CD8-positive, alpha-beta memory T cell (primary cell): ENCODE measurements at regions of chr15 and their contacts with region 1.

Region 1: DNA sequence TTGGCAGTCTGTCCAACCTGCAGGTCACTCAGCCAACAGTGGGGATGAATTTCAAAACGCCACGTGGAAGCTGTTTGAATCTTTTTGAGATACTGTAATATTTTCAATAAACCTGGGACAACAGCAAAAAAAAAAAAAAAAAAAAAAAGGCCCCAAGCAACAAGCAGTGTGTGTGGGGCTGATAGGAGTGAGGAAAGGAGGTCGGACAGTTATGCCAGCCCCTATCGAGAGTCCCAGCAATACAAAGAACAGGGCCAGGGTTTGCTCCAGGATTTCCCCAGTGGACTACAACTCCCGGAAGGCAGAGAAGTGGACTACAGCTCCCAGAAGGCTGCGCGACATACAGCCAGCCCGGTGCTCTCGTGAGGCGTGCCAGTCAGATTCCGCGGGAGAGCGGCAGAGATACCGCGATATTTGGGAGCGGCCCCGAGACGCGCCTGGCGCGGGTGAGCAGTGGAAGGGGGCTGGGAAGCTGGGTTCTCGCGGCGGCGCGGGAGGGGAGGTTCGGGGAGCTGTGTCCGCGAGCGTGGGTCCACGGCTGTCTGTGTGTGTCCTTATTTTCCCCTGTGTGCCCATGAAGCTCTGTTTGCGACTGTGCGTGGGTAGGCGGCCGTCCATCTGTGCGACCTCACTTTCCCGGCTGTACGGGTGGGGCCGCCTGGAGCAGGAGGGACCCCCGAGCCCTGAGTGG is at the start of gene PPCDC:
- DNase-seq: peak; percentile 86 to 96 (median 91)
- H3K4me3 ChIP-seq: peak within 1 kb of the TSS; percentile 84
- H3K4me3 Mint-ChIP-seq: peak within 1 kb of the TSS; percentile 91 to 97 (median 94)
- H3K27ac ChIP-seq: peak within 1 kb of the TSS; percentile 82
- H3K27ac Mint-ChIP-seq: peak within 1 kb of the TSS; percentile 74 to 97 (median 90)
- H3K4me1 ChIP-seq: peaks cover 12% of the 10 kb centered on the region
- H3K4me1 Mint-ChIP-seq: peaks cover 17 to 23% (median 23%) of the 10 kb centered on the region in 3 donors
- H3K27me3 ChIP-seq: no peaks in the 10 kb centered on the region
- H3K27me3 Mint-ChIP-seq: peaks cover 0 to 1% of the 10 kb centered on the region in 2 donors
- total RNA-seq, gene PPCDC: 35.5 to 39.2 TPM

Region 2: DNA sequence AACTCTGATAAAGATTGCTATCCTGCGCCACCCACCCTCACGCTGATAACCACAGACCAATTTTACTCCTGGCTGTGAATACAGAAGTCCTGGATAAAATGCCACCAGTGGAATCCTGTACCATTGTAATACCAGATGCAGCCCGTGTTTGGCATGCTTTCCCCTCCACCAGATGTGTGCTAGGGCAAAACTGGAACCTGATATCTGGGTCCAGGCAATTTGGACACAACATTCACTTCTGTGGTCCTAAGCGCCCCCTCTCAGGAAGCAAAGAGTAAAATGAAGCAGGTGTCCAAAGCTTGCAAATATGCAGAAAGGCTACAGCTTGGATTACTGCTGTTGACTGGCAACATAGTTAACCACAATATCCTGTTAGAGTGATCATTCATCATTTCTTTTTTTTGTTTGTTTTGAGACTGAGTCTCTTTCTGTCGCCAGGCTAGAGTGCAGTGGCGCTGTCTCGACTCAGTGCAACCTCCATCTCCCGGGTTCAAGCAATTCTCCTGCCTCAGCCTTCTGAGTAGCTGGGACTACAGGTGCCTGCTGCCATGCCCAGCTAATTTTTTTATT is 1064.2 kb before region 1 on chr15:
- CTCF ChIA-PET with region 1: no interaction called
- POLR2A ChIA-PET with region 1: interaction called, 10 read pairs
- DNase-seq: peak in 2 of 5 donors; percentile 38 to 68
- H3K4me3 ChIP-seq: no peak overlapping the region
- H3K4me3 Mint-ChIP-seq: peak overlapping the region; percentile 25 to 86 (median 59)
- H3K27ac ChIP-seq: no peak overlapping the region
- H3K27ac Mint-ChIP-seq: peak overlapping the region; percentile 37 to 89 (median 54)
- H3K4me1 ChIP-seq: peaks cover 22% of the 10 kb centered on the region
- H3K4me1 Mint-ChIP-seq: peaks cover 20 to 30% (median 25%) of the 10 kb centered on the region in 3 donors
- H3K27me3 ChIP-seq: no peaks in the 10 kb centered on the region
- H3K27me3 Mint-ChIP-seq: no peaks in the 10 kb centered on the region

Region 3: GRCh38 chr15:74873756-74874424 is 149.4 kb before region 1 on chr15:
- CTCF ChIA-PET with region 1: no interaction called
- POLR2A ChIA-PET with region 1: no interaction called
- DNase-seq: no peak
- H3K4me3 ChIP-seq: peak overlapping the region; percentile 92
- H3K4me3 Mint-ChIP-seq: peak overlapping the region; percentile 94 to 100 (median 97)
- H3K27ac ChIP-seq: peak overlapping the region; percentile 96
- H3K27ac Mint-ChIP-seq: peak overlapping the region; percentile 95 to 100 (median 96)
- H3K4me1 ChIP-seq: peaks cover 34% of the 10 kb centered on the region
- H3K4me1 Mint-ChIP-seq: peaks cover 40 to 48% (median 43%) of the 10 kb centered on the region in 3 donors
- H3K27me3 ChIP-seq: no peaks in the 10 kb centered on the region
- H3K27me3 Mint-ChIP-seq: no peaks in the 10 kb centered on the region

Region 4: GRCh38 chr15:75090388-75090734 is 67.0 kb after region 1 on chr15:
- CTCF ChIA-PET with region 1: no interaction called
- POLR2A ChIA-PET with region 1: interaction called, 13 read pairs
- DNase-seq: no peak
- H3K4me3 ChIP-seq: no peak overlapping the region
- H3K4me3 Mint-ChIP-seq: no peak overlapping the region
- H3K27ac ChIP-seq: no peak overlapping the region
- H3K27ac Mint-ChIP-seq: no peak overlapping the region
- H3K4me1 ChIP-seq: no peaks in the 10 kb centered on the region
- H3K4me1 Mint-ChIP-seq: no peaks in the 10 kb centered on the region
- H3K27me3 ChIP-seq: no peaks in the 10 kb centered on the region
- H3K27me3 Mint-ChIP-seq: peaks cover 0 to 1% of the 10 kb centered on the region in 2 donors